HCT116 (cell line): ENCODE measurements at regions of chr6 and their contacts with region 1.

Region 1: GRCh38 chr6:50816115-50816675 is 2.5 kb upstream of the TFAP2B start:
- DNase-seq: peak; percentile 34
- ATAC-seq: no peak
- H3K4me3 ChIP-seq: no peak overlapping the region
- H3K27ac ChIP-seq: no peak overlapping the region
- H3K4me1 ChIP-seq: no peaks in the 10 kb centered on the region
- H3K27me3 ChIP-seq: no peaks in the 10 kb centered on the region
- CTCF ChIP-seq: peak; percentile 27 to 82 (median 59); a peak in 4 of 6 replicates
- POLR2A ChIP-seq: no peak
- RAD21 ChIP-seq: peak; percentile 60

Region 2: GRCh38 chr6:51959744-51960383 is 1143.7 kb after region 1 on chr6:
- CTCF ChIA-PET with region 1: no interaction called
- POLR2A ChIA-PET with region 1: no interaction called
- RAD21 ChIA-PET with region 1: no interaction called
- intact Hi-C with region 1: loop called (anchors 1 kb)
- DNase-seq: peak; percentile 43
- ATAC-seq: peak; percentile 82
- H3K4me3 ChIP-seq: no peak overlapping the region
- H3K27ac ChIP-seq: no peak overlapping the region
- H3K4me1 ChIP-seq: no peaks in the 10 kb centered on the region
- H3K27me3 ChIP-seq: 0 out of 2 replicates have a peak, but pooled peaks cover 6% of the 10 kb centered on the region
- CTCF ChIP-seq: peak; percentile 34 to 80 (median 80); a peak in 5 of 6 replicates
- POLR2A ChIP-seq: no peak
- RAD21 ChIP-seq: peak; percentile 75

Region 3: DNA sequence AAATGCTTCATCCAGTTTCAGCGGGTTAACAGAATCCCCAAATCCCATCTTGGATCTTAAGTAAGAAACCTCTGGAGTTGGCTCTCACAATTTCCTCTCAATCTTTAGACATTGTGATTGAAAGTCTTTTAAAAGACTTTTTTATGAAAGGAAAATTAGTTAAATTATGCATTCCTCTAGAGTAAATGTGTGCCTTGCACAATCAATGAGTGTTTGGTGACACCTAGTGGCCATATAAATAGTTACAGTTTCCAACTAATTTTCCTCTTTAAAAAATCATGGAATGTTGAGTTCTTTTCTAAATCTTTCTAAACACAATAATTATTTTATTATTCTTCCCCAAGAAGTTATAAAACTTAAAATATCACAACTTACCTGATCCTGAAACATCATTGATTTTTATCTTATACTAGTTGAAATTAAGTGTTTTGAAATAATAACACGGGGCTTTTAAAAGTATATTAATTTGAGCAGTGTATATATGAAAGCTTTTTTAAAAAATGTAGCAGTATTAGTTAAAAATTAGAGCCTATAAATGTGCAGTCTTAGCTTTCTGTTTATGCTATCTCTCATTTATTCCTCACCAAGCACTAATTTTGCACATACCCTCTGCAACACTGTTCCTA is 1204.9 kb after region 1 on chr6:
- CTCF ChIA-PET with region 1: no interaction called
- POLR2A ChIA-PET with region 1: no interaction called
- RAD21 ChIA-PET with region 1: no interaction called
- intact Hi-C with region 1: loop called (anchors 1 kb)
- DNase-seq: peak; percentile 3
- ATAC-seq: no peak
- H3K4me3 ChIP-seq: no peak overlapping the region
- H3K27ac ChIP-seq: no peak overlapping the region
- H3K4me1 ChIP-seq: no peaks in the 10 kb centered on the region
- H3K27me3 ChIP-seq: peaks cover 4% of the 10 kb centered on the region; the same call in 1 of the 2 replicates
- CTCF ChIP-seq: peak; percentile 48 to 77 (median 50); a peak in 4 of 6 replicates
- POLR2A ChIP-seq: no peak
- RAD21 ChIP-seq: peak; percentile 67

Region 4: DNA sequence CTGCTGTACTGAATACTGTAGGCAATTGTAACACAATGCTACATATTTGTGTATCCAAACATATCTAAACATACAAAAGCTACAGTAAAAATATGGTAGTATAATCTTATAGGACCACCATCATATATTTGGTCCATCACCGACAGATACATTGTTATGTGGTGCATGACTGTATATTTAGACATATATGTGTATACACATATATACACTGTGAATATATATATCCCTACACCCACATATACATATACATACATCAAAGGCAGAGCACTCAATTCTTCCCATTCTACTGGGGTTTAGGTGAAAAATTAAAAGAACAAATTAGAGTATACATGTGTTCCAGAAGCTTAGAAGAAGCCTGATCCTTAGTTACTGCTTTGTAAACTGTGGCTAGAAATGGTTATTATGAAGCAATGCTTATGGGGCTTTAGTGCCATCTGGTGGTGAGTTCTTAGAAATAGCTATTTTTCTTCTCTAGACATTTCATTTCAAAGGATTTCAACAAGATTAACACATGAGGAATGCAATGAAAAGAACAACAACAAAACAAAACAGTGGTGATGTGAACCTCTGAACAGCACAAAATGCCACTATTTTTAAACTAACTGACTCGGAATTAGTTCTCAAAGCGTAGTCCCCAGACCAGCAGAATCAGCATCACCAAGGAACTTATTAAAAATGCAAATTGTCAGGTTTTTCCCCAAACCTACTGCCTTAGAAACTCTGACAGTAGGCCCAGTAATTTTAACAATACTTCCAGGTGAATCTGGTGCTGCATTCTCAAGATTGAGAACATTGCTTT is 1233.3 kb after region 1 on chr6:
- CTCF ChIA-PET with region 1: no interaction called
- POLR2A ChIA-PET with region 1: no interaction called
- RAD21 ChIA-PET with region 1: no interaction called
- intact Hi-C with region 1: loop called (anchors 1 kb)
- DNase-seq: peak; percentile 32
- ATAC-seq: peak; percentile 74
- H3K4me3 ChIP-seq: no peak overlapping the region
- H3K27ac ChIP-seq: no peak overlapping the region
- H3K4me1 ChIP-seq: no peaks in the 10 kb centered on the region
- H3K27me3 ChIP-seq: peaks cover 48% of the 10 kb centered on the region; the same call in 1 of the 2 replicates
- CTCF ChIP-seq: peak; percentile 32 to 76 (median 60); a peak in 5 of 6 replicates
- POLR2A ChIP-seq: no peak
- RAD21 ChIP-seq: peak; percentile 59